Ascending aorta (tissue), 2 donors: ENCODE measurements at regions of chr13 and their contacts with region 1.

Region 1: GRCh38 chr13:110715395-110716235 is 2.1 kb downstream of the ING1 start:
- DNase-seq: peak; percentile 99
- H3K4me3 ChIP-seq: peak overlapping the region; percentile 86 to 90
- H3K27ac ChIP-seq: peak overlapping the region; percentile 98 to 100
- H3K4me1 ChIP-seq: peaks cover 4 to 20% of the 10 kb centered on the region in 2 donors
- H3K27me3 ChIP-seq: no peaks in the 10 kb centered on the region
- CTCF ChIP-seq: peak; percentile 33 to 49 (median 33)

Region 2: DNA sequence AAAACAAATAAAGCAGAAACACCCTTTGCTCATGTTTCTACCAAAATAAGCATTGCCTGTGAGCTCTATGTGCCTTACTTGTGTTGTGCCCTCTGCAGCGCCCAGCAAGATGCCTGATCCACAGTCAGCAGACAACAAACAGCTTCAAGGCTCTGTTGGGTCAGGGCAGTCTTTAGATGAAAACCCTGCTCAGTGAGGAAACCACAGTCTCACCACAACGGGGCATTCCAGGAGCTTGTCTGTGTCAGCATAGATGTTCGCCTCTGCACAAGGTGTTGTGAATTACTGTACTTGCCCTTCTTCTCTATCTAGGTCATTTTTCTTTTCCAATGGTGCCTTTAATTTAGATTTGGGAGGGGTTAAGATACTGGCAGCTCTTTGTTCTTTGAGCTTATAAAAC is 660.5 kb before region 1 on chr13:
- intact Hi-C with region 1: loop called (anchors 10 kb)
- DNase-seq: no peak
- H3K4me3 ChIP-seq: no peak overlapping the region
- H3K27ac ChIP-seq: no peak overlapping the region
- H3K4me1 ChIP-seq: peaks cover 0 to 12% of the 10 kb centered on the region in 2 donors
- H3K27me3 ChIP-seq: no peaks in the 10 kb centered on the region
- CTCF ChIP-seq: no peak

Region 3: DNA sequence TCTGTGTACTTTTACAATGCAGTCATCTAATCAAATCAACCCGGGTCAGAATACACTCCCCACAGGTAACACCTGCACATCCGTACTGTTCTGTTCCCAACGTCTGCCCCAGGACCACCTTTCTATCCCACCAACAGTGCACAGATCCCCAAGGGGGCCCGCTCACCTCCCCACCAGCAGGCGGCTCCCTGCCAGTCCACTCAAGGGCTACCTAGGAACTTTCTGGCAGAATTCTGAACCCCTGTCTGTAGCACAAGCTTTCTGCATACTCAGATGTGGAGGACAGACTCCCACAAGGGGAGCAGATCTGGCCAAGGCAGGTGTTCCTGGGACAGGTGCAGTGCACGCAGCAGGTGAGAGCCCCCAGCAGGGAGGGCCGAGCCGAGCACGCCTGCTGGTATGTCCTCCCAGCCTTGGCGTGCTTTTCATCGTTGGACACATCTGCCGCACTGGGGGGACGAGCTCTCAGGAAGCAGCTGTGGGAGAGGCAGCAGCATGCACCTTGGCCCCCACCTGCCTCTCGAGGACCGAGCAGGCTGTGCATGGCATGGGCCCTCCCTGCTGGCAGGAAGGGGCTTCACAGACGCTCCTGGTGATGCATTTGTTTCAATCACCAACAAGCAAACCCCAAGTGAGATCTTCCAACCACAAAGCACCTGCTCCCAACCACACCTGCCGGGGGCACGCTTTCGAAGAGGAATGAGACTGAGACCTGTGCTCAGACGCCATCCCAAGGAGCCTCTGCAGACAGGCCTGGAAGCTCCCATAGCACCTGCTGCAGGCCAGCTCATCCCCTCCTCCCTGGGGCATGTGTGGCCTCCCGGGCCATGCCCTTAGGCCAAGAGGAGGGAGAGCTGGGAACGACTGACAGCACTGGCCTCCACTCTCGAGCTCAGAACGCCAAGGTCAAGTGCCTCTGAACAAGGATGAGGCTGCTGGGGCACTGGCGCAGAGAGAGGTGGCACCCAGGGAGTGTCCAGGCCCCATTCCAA is 190.0 kb before region 1 on chr13:
- intact Hi-C with region 1: loop called (anchors 10 kb)
- DNase-seq: no peak
- H3K4me3 ChIP-seq: no peak overlapping the region
- H3K27ac ChIP-seq: peak overlapping the region; percentile 89 to 90
- H3K4me1 ChIP-seq: peaks cover 45 to 86% of the 10 kb centered on the region in 2 donors
- H3K27me3 ChIP-seq: no peaks in the 10 kb centered on the region
- CTCF ChIP-seq: no peak

Region 4: DNA sequence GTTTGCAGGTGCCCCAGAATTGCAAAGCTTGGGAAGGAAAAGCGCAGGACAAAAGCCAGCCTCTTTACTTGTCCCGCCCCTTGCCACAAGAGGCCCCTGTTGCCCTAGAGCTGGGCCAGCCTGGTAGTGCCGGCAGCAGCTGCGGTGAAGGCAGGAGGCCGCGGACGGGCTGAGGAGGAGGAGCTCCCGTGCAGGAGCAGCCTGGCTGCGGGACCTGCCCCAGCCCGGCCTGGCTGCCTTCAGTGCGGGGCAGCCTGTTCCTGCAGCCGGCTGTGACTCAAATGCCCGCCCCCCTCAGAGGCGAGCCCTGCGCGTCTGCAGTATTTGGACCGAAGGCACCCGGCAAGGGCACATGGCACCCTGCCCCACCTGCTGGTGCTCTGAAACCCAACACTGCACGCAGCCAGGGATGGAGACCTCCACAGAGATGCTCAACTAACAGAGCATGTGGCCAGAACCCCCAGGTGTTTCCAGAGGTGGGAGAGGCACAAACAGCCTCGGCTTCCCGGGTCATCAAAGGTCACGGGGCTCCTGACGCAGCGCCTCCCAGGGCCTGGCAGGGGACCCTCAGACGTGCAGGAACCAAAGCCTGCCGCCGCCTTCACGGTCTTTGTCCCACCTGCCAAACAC is 70.6 kb before region 1 on chr13:
- intact Hi-C with region 1: loop called (anchors 5 kb)
- DNase-seq: peak; percentile 27 to 72
- H3K4me3 ChIP-seq: no peak overlapping the region
- H3K27ac ChIP-seq: no peak overlapping the region
- H3K4me1 ChIP-seq: peaks cover 0 to 4% of the 10 kb centered on the region in 2 donors
- H3K27me3 ChIP-seq: no peaks in the 10 kb centered on the region
- CTCF ChIP-seq: peak; percentile 4 to 45 (median 23)

Region 5: DNA sequence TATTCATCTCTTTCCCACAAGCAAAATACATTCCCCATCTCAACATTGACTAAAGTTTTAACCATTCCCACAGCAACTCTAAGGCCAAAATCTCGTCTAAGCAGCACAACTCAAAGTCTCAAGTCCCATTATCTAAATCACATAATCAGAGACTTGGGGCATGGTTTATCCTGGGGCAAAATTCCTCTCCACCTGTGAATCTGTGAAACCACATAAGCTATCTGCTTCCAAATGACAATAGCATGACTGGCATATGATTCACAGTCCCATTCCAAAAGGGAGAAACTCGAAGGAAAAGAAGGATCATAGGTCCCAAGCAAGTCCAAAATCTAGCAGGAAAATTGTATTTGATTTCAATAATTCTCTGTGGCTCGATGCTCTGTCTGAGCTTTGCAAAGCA is 126.2 kb after region 1 on chr13:
- intact Hi-C with region 1: no loop called
- DNase-seq: no peak
- H3K4me3 ChIP-seq: no peak overlapping the region
- H3K27ac ChIP-seq: no peak overlapping the region
- H3K4me1 ChIP-seq: no peaks in the 10 kb centered on the region
- H3K27me3 ChIP-seq: no peaks in the 10 kb centered on the region
- CTCF ChIP-seq: no peak

Region 6: DNA sequence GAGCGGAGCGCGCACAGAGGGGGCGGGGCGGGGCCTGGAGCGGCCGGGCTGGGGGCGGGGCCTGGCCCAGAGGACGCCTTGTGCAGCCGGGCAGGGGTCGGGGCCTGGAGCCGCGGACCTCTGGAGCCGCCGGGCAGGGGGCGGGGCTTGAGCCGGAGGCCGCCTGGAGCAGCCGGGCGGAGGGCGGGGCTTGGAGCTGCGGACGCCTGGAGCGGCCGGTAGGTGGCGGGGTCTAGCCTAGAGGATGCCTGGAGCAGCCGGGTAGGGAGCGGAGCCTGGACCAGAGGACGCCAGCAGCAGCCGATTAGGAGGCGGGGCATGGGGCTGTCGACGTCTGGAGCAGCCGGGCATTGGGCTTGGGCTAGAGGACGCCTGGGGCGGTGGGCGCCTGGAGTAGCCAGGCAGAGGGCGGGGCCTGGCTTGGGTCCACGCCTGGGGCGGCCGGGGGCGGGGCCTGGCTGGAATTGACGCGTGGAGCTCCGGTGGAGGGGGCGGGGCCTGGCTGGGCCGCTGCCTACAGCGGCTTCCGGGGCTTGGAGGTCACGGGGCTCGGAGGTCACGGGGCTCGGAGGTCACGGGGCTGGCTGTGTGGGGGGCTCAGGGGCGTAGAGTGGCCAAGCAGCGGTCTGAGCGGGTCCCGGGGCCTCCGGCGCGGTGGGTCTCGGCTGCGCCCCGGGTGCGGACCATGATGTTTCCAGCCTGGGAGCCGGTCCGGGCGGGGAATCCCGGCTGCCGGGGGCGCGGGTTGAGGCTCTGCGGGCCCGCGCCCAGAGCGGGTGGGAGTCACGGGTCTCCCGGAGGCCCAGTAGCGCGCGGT is 199.7 kb after region 1 on chr13 and contains the start of gene ANKRD10:
- intact Hi-C with region 1: loop called (anchors 1 kb)
- DNase-seq: peak; percentile 99
- H3K4me3 ChIP-seq: peak within 1 kb of the TSS; percentile 90 to 92
- H3K27ac ChIP-seq: peak within 1 kb of the TSS; percentile 99 to 100
- H3K4me1 ChIP-seq: peaks cover 12 to 28% of the 10 kb centered on the region in 2 donors
- H3K27me3 ChIP-seq: no peaks in the 10 kb centered on the region
- CTCF ChIP-seq: peak; percentile 92 to 95 (median 92)
- total RNA-seq, gene ANKRD10: 100 TPM

Region 7: GRCh38 chr13:111122056-111122455 is 406.4 kb after region 1 on chr13:
- intact Hi-C with region 1: no loop called
- DNase-seq: no peak
- H3K4me3 ChIP-seq: peak overlapping the region in 1 of 2 donors; percentile 18
- H3K27ac ChIP-seq: peak overlapping the region; percentile 9 to 42
- H3K4me1 ChIP-seq: peaks cover 6 to 37% of the 10 kb centered on the region in 2 donors
- H3K27me3 ChIP-seq: no peaks in the 10 kb centered on the region
- CTCF ChIP-seq: no peak

Region 8: GRCh38 chr13:111281751-111282311 is 566.2 kb after region 1 on chr13:
- intact Hi-C with region 1: loop called (anchors 5 kb)
- DNase-seq: peak in 1 of 2 donors; percentile 71
- H3K4me3 ChIP-seq: no peak overlapping the region
- H3K27ac ChIP-seq: peak overlapping the region; percentile 89 to 93
- H3K4me1 ChIP-seq: peaks cover 7 to 35% of the 10 kb centered on the region in 2 donors
- H3K27me3 ChIP-seq: no peaks in the 10 kb centered on the region
- CTCF ChIP-seq: peak in 1 of 3 experiments; percentile 19